ENCODE measurements at regions of chr14 and their contacts with region 1.

Region 1: GRCh38 chr14:51996148-51996746 is 6.9 kb downstream of the RTRAF start:
- DNase-seq: no peak
- H3K4me3 Mint-ChIP-seq: no peak overlapping the region
- H3K27ac Mint-ChIP-seq: no peak overlapping the region
- H3K4me1 Mint-ChIP-seq: peaks cover 35% of the 10 kb centered on the region
- H3K27me3 Mint-ChIP-seq: no peaks in the 10 kb centered on the region

Region 2: GRCh38 chr14:52021957-52022600 is 25.8 kb after region 1 on chr14:
- intact Hi-C with region 1: loop called (anchors 2 kb)
- DNase-seq: no peak
- H3K4me3 Mint-ChIP-seq: no peak overlapping the region
- H3K27ac Mint-ChIP-seq: no peak overlapping the region
- H3K4me1 Mint-ChIP-seq: peaks cover 33% of the 10 kb centered on the region
- H3K27me3 Mint-ChIP-seq: no peaks in the 10 kb centered on the region

Region 3: DNA sequence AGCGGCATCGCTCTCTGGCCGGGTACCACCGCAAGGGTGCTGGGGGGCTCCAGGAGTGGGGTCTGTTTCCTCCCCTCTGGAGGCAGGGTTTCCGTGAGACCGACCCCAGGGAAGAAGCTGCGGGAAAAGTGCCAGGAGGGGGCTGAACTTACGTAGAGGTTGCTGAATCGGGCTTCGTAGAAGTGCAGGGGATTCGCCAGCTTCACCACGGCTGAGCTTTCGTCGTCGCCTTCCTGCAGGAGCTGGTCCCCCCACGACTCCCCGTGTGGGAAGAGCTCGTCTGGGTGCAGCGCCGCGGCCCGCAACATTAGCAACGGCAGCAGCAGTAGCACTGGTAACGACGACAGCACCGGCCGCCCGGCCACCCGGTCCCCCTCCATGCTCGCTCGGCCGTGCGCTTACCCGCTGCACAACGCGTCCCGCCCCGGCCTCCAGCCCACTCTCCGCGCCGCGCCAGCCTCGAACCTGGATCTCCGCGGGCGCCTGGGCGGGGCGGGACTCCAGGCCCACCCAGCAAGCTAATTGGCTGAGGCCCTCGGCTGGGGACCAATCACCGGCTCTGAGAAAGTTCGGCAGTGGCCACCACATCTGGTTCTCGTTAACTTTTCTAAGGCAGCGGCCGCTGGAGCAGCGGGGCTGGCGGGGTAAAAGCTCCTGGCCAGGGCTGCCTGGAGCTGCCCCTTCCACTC is 72.5 kb after region 1 on chr14 and contains the start of gene NID2:
- intact Hi-C with region 1: loop called (anchors 2 kb)
- DNase-seq: peak; percentile 41
- H3K4me3 Mint-ChIP-seq: peak within 1 kb of the TSS; percentile 48
- H3K27ac Mint-ChIP-seq: peak within 1 kb of the TSS; percentile 3
- H3K4me1 Mint-ChIP-seq: peaks cover 13% of the 10 kb centered on the region
- H3K27me3 Mint-ChIP-seq: peaks cover 52% of the 10 kb centered on the region
- total RNA-seq, gene NID2: 0.16 and 0.34 TPM in 2 replicates

Region 4: GRCh38 chr14:52131640-52132320 is 135.5 kb after region 1 on chr14:
- intact Hi-C with region 1: loop called (anchors 2 kb)
- DNase-seq: no peak
- H3K4me3 Mint-ChIP-seq: no peak overlapping the region
- H3K27ac Mint-ChIP-seq: no peak overlapping the region
- H3K4me1 Mint-ChIP-seq: no peaks in the 10 kb centered on the region
- H3K27me3 Mint-ChIP-seq: peaks cover 3% of the 10 kb centered on the region

Region 5: DNA sequence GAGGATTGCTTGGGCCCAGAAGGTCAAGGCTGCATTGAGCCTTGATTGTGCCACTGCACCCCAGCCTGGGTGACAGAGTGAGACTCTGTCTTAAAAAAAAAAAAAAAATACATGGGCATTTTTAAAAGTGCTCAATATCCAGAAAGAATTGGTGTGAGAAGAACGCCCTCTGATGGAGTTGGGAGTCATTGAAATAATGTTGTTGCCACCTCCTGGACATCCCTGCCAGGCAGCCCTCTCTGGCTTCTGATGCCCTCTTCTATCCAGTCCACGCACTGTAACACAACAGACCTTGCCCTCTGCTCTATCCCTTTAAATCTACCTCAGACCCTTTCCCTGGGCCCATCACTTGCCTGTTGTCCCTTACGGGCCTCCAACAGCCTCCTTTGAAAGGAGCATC is 276.1 kb after region 1 on chr14:
- intact Hi-C with region 1: loop called (anchors 2 kb)
- DNase-seq: no peak
- H3K4me3 Mint-ChIP-seq: no peak overlapping the region
- H3K27ac Mint-ChIP-seq: no peak overlapping the region
- H3K4me1 Mint-ChIP-seq: peaks cover 21% of the 10 kb centered on the region
- H3K27me3 Mint-ChIP-seq: peaks cover 57% of the 10 kb centered on the region

Region 6: DNA sequence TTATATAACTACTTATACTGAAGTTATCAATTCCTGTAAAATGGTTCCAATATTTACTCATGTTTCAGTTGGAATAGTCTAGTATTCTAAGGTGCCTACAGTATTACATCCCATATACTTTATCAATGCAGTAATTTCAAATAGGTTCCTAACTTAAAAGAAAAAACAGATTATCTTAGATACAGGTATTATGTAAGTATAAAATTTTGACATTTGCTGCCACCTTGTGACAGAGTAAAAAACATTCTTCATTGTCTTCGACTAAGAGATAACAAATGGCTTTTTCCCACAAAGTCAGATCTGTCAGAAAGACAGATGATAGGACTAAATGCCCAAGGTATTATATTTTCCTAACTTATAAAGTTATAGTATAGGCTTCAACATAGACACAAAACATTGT is 477.3 kb after region 1 on chr14:
- intact Hi-C with region 1: loop called (anchors 1 kb)
- DNase-seq: no peak
- H3K4me3 Mint-ChIP-seq: no peak overlapping the region
- H3K27ac Mint-ChIP-seq: no peak overlapping the region
- H3K4me1 Mint-ChIP-seq: peaks cover 26% of the 10 kb centered on the region
- H3K27me3 Mint-ChIP-seq: no peaks in the 10 kb centered on the region